CD4-positive, alpha-beta memory T cell (primary cell): ENCODE measurements at regions of chr19 and their contacts with region 1.

Region 1: GRCh38 chr19:44500148-44500956 is at the start of gene ZNF180:
- DNase-seq: peak; percentile 92 to 95 (median 93)
- H3K4me3 ChIP-seq: peak within 1 kb of the TSS; percentile 89 to 95
- H3K4me3 Mint-ChIP-seq: peak within 1 kb of the TSS; percentile 94 to 97 (median 96)
- H3K27ac ChIP-seq: peak within 1 kb of the TSS; percentile 67
- H3K27ac Mint-ChIP-seq: peak within 1 kb of the TSS; percentile 86 to 96 (median 93)
- H3K4me1 ChIP-seq: peaks cover 25% of the 10 kb centered on the region
- H3K4me1 Mint-ChIP-seq: peaks cover 16 to 42% (median 31%) of the 10 kb centered on the region in 4 donors
- H3K27me3 ChIP-seq: no peaks in the 10 kb centered on the region
- H3K27me3 Mint-ChIP-seq: peaks cover 3 to 7% of the 10 kb centered on the region in 2 donors
- total RNA-seq, gene ZNF180: 17.1 to 18.0 TPM

Region 2: DNA sequence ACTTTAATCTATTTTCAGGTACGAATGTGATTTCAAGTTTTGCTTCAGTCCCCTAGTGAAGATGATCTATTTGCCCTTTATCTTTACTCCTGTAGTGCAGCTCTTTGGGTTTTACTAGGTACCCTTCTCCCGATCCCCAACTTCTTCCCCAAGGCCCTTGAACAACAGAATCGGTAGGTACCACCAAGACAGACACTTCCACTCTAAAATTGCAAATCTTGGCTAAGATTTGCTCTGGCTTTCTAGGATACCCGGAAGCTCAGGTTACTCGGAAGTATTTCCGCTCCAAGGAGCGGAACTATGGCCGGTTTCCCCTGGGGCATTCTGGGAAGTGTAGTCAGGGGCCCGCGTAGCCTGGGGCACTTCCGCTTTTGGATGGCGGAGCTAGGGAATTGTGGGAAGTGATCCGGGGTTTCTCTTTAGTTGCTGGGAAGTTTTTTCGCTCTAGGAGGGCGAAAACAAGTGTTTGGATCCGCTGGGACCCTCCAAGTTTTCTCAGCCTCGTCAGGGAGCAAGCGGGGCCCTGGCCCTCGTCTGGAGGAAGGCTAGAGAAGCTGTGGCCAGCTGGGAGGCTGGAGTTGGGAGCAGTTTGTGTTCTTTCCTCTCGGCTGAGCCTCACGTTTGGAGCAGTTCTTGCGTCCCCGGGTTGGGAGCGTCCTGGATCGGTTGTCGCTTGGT is 293.1 kb before region 1 on chr19:
- CTCF ChIA-PET with region 1: no interaction called
- POLR2A ChIA-PET with region 1: interaction called, 10 read pairs
- intact Hi-C with region 1: loop called (anchors 1 kb)
- DNase-seq: peak; percentile 61 to 77 (median 75)
- H3K4me3 ChIP-seq: peak overlapping the region; percentile 72 to 73
- H3K4me3 Mint-ChIP-seq: peak overlapping the region; percentile 89 to 95 (median 95)
- H3K27ac ChIP-seq: peak overlapping the region; percentile 60
- H3K27ac Mint-ChIP-seq: peak overlapping the region; percentile 61 to 95 (median 90)
- H3K4me1 ChIP-seq: peaks cover 5% of the 10 kb centered on the region
- H3K4me1 Mint-ChIP-seq: peaks cover 5 to 14% (median 10%) of the 10 kb centered on the region in 4 donors
- H3K27me3 ChIP-seq: no peaks in the 10 kb centered on the region
- H3K27me3 Mint-ChIP-seq: peaks cover 0 to 6% of the 10 kb centered on the region in 2 donors

Region 3: DNA sequence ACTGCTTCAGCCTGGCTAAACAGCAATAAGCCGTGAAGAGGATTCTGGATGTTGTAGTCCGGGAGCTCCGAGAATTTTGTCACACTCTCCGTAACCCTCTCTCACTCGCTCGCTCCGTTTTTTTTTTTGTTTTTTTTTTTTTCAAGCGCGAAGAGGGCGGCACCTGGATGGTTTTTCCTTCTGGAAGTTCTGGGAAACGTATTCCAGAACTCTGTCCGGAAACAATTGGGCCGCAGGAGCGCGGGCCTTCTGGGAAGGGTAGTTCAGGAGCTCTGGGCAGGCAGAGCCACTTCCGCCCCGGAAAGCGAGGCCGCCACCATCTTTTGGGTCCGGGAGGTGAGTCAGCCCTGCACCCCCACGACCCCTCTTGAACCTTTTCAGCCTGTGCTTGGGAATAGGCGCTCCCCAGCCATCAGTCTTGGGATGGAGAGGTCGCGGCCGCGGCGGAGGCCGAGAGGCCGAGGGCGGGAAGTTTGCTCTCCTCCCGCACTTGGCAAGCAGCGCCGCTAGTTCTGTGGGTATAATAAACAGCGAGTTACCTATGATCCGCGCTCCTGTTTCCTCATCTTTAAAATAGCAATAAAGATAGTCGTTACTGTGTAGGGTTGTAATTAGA is 288.0 kb before region 1 on chr19 and contains the start of gene ZNF227:
- CTCF ChIA-PET with region 1: no interaction called
- POLR2A ChIA-PET with region 1: interaction called, 10 read pairs
- intact Hi-C with region 1: loop called (anchors 1 kb)
- DNase-seq: peak; percentile 73 to 86 (median 79)
- H3K4me3 ChIP-seq: peak within 1 kb of the TSS; percentile 52 to 93
- H3K4me3 Mint-ChIP-seq: peak within 1 kb of the TSS; percentile 96 to 99 (median 98)
- H3K27ac ChIP-seq: peak within 1 kb of the TSS; percentile 78
- H3K27ac Mint-ChIP-seq: peak within 1 kb of the TSS; percentile 85 to 99 (median 97)
- H3K4me1 ChIP-seq: peaks cover 17% of the 10 kb centered on the region
- H3K4me1 Mint-ChIP-seq: peaks cover 20 to 34% (median 23%) of the 10 kb centered on the region in 4 donors
- H3K27me3 ChIP-seq: no peaks in the 10 kb centered on the region
- H3K27me3 Mint-ChIP-seq: no peaks in the 10 kb centered on the region
- total RNA-seq, gene ZNF227: 51.6 to 54.4 TPM

Region 4: DNA sequence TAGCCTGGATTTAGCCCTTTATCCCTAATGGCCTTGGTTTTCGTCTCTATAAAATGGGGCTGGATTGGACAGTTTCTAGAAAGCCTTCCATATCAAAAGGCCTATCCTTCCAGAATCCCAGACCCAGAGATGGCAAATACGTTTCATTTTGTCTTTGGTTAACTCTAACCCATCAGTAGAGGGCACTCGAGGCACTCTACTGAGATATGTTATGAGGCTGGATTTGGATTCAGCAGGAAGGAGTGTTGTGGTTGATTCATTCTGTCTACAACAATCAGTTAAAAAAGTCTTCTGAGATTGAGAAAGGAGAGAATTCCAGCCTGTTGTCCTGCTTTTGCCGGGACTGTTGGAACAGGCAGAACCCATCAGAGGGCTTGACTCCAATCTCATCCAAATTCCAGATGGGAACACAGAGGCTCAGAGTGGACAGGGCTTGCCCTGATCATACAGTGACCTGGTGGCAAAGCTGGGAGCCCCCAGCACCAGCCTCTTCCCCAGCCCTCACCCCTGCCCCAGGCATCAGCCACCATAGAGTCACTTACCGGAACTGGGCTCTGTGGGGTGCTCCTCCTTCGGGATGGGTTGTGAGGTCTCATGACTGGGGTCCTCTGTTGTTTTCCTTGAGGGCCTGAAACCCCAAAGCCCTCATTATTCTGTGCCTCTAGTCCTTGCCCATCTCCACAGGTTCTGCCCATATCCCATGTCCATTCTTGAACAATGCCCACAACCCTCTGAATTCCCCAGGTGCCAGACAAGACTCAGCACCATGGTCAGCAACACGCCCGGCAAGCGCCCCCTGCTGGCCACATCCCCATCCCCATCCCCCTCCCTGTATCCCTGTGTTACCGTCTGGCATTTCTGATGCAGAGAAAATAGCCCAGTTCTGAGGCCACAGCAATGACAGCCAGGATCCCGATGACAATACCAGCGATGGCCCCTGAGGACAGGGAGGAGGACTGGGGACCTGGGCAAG is 12.3 kb after region 1 on chr19:
- CTCF ChIA-PET with region 1: no interaction called
- POLR2A ChIA-PET with region 1: no interaction called
- intact Hi-C with region 1: no loop called
- DNase-seq: no peak
- H3K4me3 ChIP-seq: no peak overlapping the region
- H3K4me3 Mint-ChIP-seq: no peak overlapping the region
- H3K27ac ChIP-seq: no peak overlapping the region
- H3K27ac Mint-ChIP-seq: no peak overlapping the region
- H3K4me1 ChIP-seq: no peaks in the 10 kb centered on the region
- H3K4me1 Mint-ChIP-seq: peaks cover 0 to 2% (median 0%) of the 10 kb centered on the region in 4 donors
- H3K27me3 ChIP-seq: no peaks in the 10 kb centered on the region
- H3K27me3 Mint-ChIP-seq: peaks cover 19 to 21% of the 10 kb centered on the region in 2 donors